Activated T-helper 2 cell treated with anti-CD3 and anti-CD28 coated beads, Interferon-gamma antibody, Interleukin-2, Interleukin-4, amounts not matched to agents 10 μg/mL and 5 μg/mL and 100 μg/mL, durations not matched to agents 14 hours and 24 hours and 36 hours (primary cell): ENCODE measurements at regions of chr5 and their contacts with region 1.

Region 1: DNA sequence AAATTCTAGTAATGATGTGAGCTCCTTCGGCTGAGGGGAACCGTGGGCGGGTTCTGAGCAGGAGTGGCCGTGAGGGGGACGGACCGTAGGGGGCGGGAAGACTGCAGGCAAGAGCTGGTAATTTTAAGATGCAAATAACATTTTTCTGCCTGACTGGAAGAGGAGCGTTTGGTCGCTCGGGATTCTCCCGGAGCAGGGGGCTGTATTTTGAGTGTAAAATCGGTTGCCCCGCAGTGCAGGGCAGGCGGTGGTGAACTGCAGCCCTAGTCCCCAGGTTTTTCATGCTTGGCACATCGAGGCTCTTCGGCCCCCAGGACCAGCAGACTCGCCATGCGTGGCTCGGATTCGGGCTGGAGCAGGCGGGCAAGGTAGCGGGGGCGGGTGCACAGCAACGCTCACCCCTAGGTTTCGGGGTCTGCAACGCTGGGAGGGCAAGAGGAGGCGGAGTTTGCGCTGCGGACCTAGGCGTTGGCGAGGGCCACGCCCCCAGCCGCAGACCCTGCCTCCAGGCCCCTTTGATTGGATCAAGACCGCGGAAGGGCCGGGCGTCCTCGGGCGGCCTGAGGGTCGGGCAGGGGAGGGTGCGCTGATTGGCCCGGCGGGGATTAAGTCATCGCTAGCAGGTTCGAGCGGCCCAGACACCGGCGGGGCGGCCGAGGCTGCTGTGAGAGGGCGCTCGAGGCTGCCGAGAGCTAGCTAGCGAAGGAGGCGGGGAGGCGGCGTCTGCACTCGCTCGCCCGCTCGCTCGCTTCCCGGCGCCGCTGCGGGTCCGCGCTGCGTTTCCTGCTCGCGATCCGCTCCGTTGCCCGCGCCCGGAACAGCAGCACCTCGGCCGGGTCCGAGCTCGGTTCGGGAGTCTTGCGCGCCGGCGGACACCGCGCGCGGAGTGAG is at the start of gene ARHGAP26:
- DNase-seq: peak; percentile 91
- H3K4me3 Mint-ChIP-seq: peak within 1 kb of the TSS; percentile 91
- H3K27ac Mint-ChIP-seq: peak within 1 kb of the TSS; percentile 89
- H3K4me1 Mint-ChIP-seq: peaks cover 34% of the 10 kb centered on the region
- H3K27me3 Mint-ChIP-seq: no peaks in the 10 kb centered on the region
- total RNA-seq, gene ARHGAP26: 13.6 and 15.1 TPM in 2 replicates

Region 2: GRCh38 chr5:142748568-142749249 is 21.3 kb before region 1 on chr5:
- intact Hi-C with region 1: loop called (anchors 1 kb)
- DNase-seq: no peak
- H3K4me3 Mint-ChIP-seq: no peak overlapping the region
- H3K27ac Mint-ChIP-seq: no peak overlapping the region
- H3K4me1 Mint-ChIP-seq: peaks cover 11% of the 10 kb centered on the region
- H3K27me3 Mint-ChIP-seq: peaks cover 12% of the 10 kb centered on the region

Region 3: GRCh38 chr5:142783601-142784341 is 13.8 kb after region 1 on chr5:
- intact Hi-C with region 1: loop called (anchors 1 kb)
- DNase-seq: peak; percentile 35
- H3K4me3 Mint-ChIP-seq: peak overlapping the region; percentile 27
- H3K27ac Mint-ChIP-seq: peak overlapping the region; percentile 86
- H3K4me1 Mint-ChIP-seq: peaks cover 66% of the 10 kb centered on the region
- H3K27me3 Mint-ChIP-seq: no peaks in the 10 kb centered on the region

Region 4: DNA sequence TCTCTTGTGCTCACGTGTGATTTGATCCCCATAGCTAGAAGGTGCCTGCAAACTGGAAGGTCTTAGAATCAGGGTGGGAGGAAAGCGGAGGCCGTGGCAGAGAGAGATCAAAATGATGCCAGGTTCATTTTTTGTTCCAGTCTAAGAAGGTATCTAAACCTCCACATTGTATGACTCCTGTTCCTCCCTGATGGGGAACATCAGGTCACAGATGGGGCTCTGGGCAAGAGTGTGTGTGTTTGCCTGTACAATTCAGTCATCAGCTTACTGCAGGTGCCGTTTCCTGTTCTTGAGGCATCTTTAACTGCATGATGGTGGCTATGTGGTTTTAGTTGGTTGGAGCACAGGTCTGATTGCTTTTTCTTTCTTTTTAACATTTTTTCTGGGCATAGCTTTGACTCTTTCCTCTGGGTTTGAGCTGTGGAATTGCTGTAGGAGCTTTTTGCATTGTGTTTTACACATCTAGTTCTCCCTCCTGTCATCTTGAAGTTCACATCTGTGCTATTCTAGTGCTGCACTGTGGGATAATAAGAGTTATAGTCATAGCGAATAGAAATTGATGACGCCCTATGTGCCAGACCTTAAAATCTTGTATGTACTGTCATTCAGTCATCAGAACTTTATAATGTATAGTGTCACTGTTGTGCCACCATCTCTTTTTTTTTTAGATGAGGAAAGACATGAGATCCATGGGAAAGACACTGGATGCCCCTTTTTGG is 30.9 kb after region 1 on chr5:
- intact Hi-C with region 1: loop called (anchors 1 kb)
- DNase-seq: peak; percentile 55
- H3K4me3 Mint-ChIP-seq: peak overlapping the region; percentile 64
- H3K27ac Mint-ChIP-seq: peak overlapping the region; percentile 92
- H3K4me1 Mint-ChIP-seq: peaks cover 56% of the 10 kb centered on the region
- H3K27me3 Mint-ChIP-seq: no peaks in the 10 kb centered on the region

Region 5: DNA sequence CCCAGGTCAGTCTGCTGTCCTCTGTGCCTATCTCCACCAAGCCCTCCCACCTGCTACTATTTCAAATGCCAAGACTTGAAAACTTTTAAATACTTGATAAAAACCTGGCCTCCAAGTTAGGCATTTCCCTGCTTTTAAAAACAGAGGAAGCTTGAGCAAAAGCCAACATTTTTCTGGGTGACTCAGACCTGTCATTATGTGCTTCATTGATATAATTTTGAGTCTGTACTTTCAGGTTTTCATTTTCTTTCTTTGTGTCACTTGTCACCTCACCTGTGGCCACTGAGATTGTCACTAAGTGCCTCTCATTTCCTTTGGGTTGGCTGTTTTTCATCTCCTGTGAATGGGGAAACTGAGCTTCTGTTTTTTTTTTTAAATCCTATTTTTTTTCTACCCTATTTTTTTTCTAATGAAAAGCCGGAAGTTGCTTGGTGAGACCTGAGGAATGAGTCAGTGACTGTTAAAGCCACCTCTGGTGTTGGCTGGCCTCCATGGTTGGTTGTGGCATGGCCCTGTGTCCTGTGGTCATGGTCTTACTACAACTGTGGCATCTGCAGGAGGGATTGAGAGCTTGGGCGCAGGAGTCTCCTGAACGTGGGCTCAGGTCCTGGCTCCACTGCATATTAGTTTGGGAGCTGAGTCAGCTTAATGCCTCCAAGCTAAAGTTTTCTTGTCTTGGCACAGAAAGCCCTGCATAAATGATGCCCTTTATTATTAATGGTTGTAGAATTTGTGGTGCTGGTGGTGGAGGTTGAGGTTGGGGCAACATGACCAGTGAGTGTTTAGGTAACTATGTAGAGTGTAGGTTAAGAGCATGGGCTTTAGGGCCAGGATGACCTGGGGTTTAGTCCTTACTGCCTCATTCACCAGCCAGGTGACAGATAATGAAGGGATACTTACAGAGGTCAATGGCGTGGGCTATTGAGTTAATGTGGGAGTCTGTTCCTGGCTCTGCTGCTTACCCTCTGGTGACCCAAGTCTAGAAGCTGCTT is 57.1 kb after region 1 on chr5:
- intact Hi-C with region 1: loop called (anchors 1 kb)
- DNase-seq: no peak
- H3K4me3 Mint-ChIP-seq: no peak overlapping the region
- H3K27ac Mint-ChIP-seq: peak overlapping the region; percentile 48
- H3K4me1 Mint-ChIP-seq: peaks cover 72% of the 10 kb centered on the region
- H3K27me3 Mint-ChIP-seq: no peaks in the 10 kb centered on the region

Region 6: DNA sequence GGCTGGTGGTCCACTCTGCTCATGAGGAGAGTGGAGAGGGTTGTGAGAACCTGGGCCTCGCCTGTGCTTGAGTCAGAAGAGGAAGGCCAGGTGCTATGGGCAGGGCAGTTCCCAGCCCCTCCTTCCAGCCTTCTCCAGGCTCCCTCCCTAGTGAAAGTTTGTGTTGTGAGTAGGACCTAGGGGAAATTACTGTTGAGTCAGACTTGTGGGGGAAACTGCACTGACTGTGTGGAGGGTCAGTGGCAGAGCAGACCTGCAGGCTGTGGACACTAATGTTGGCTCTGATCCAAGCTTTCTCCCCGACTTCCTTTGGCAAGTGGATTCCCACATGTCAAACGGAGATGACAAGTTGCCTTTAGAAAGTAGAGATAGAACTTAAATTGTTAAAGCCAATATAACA is 102.8 kb after region 1 on chr5:
- intact Hi-C with region 1: loop called (anchors 1 kb)
- DNase-seq: no peak
- H3K4me3 Mint-ChIP-seq: no peak overlapping the region
- H3K27ac Mint-ChIP-seq: no peak overlapping the region
- H3K4me1 Mint-ChIP-seq: peaks cover 10% of the 10 kb centered on the region
- H3K27me3 Mint-ChIP-seq: no peaks in the 10 kb centered on the region